Sciatic nerve (tissue), 2 donors: ENCODE measurements at regions of chr2 and their contacts with region 1.

Region 1: GRCh38 chr2:151523850-151524249 is 114.1 kb downstream of the RIF1 start:
- DNase-seq: no peak
- ATAC-seq: no peak

Region 2: DNA sequence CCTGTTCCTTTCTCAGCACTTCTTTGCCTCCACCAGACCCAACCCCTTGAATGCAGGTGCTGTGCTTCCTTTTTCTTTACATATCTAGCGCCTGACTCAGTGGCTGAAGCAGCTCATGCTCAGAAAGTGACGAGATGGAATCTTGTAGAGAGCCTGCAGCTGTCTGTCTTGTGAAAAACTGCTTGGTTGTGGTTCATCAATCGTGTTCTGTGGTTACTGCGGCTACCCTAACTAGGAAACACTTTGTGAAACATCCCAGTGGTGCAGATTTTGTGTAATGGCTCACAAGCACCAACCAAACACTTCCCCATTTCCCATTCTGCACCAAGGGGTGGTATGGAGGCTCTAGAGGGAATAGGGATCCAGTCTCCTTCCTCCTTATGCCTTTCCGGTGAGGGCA is 1629.1 kb before region 1 on chr2:
- intact Hi-C with region 1: loop called (anchors 5 kb)
- DNase-seq: no peak
- ATAC-seq: peak; percentile 69

Region 3: GRCh38 chr2:152223977-152224376 is 700.1 kb after region 1 on chr2:
- intact Hi-C with region 1: no loop called
- DNase-seq: no peak
- ATAC-seq: peak; percentile 63